Vagina (tissue), 2 donors: ENCODE measurements at regions of chr6 and their contacts with region 1.

Region 1: GRCh38 chr6:139955366-139956155 is 581.1 kb upstream of the CITED2 start:
- DNase-seq: no peak
- H3K4me3 ChIP-seq: no peak overlapping the region
- H3K27ac ChIP-seq: no peak overlapping the region
- H3K4me1 ChIP-seq: no peaks in the 10 kb centered on the region
- H3K27me3 ChIP-seq: no peaks in the 10 kb centered on the region
- CTCF ChIP-seq: no peak
- POLR2A ChIP-seq: no peak

Region 2: DNA sequence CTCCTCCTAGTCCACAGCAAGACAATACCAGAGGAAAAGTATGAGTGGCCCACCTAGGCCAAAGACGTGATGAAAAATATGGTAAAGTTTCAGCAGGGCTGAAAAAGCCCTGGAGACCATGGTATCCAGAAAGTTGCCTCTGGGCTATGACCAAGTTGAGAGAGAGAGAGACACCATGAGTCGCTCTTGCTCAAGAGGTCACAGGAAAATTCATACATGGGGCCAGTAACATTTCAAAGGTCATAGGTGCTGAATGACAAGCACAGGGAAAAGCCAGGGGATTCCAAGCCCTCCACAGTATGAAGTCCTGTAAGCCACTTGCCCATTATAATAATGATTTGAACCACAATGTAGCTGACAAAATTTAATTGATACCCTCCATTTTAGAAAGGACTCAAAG is 76.6 kb after region 1 on chr6:
- intact Hi-C with region 1: loop called (anchors 2 kb)
- DNase-seq: no peak
- H3K4me3 ChIP-seq: no peak overlapping the region
- H3K27ac ChIP-seq: no peak overlapping the region
- H3K4me1 ChIP-seq: no peaks in the 10 kb centered on the region
- H3K27me3 ChIP-seq: no peaks in the 10 kb centered on the region
- CTCF ChIP-seq: no peak
- POLR2A ChIP-seq: no peak